ENCODE measurements at regions of chr3 and their contacts with region 1.

Region 1: GRCh38 chr3:34807611-34808010 is 831.7 kb upstream of the ARPP21 start:
- DNase-seq: no peak

Region 2: DNA sequence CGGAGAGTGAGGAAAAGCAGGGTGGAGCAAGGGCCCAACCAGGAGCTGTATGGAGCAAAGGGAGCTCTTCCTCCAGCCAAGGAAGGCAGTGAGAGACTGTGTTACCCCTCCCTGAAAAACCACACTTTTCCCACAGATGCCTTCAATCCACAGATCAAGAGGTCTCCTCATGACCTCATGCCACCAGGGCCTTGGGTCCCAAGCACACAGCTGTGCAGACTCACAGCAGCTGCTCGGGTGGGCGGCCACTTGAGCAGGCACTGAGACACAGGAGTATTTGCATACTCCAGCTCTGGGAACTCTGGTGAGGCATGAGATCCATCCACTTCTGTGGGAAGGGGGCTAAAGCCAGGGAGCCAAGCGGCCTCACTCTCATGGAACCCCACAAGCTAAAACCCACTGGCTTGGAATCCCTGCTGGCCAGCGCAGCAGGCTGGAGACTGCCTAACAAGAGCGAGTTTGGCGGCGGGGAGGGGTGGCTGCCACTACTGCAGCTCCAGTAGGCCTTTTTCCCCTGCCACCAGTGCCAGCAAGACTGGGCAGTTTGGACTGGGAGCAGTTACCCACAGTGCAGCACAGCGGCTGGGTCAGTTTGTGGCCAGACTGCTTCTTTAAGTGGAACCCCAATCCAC is 48.9 kb before region 1 on chr3:
- intact Hi-C with region 1: no loop called
- DNase-seq: no peak

Region 3: DNA sequence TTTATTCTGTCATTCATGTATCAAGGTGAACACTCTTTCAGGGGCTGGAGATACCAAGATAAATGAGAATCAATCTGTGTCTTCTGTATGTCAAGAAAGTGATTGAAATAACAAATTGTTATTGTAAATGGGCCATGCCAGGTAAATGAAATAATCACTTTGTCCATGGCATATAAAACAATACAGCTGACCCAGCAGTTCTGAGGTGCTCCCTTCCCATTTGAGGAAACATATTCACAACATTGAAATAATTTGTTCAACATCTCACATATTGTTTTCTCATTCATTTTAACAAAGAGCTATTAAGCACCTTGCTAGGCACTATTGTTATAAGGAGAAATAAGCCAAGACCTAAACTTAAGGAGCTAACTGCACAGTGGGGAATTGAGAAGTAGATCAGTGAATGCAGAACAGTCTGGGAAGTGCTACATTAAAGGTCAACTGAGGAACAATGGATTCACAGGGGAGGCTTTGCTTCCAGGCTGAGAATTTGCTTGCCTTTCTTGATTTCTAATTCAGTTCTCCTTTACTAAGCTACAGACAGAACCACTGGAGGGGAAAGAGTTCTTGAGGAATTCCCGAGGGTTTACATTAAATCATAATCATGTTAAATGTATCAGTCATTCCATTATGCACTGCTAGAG is 25.4 kb after region 1 on chr3:
- intact Hi-C with region 1: loop called in 1 of 2 experiments (anchors 1 kb)
- DNase-seq: no peak

Region 4: DNA sequence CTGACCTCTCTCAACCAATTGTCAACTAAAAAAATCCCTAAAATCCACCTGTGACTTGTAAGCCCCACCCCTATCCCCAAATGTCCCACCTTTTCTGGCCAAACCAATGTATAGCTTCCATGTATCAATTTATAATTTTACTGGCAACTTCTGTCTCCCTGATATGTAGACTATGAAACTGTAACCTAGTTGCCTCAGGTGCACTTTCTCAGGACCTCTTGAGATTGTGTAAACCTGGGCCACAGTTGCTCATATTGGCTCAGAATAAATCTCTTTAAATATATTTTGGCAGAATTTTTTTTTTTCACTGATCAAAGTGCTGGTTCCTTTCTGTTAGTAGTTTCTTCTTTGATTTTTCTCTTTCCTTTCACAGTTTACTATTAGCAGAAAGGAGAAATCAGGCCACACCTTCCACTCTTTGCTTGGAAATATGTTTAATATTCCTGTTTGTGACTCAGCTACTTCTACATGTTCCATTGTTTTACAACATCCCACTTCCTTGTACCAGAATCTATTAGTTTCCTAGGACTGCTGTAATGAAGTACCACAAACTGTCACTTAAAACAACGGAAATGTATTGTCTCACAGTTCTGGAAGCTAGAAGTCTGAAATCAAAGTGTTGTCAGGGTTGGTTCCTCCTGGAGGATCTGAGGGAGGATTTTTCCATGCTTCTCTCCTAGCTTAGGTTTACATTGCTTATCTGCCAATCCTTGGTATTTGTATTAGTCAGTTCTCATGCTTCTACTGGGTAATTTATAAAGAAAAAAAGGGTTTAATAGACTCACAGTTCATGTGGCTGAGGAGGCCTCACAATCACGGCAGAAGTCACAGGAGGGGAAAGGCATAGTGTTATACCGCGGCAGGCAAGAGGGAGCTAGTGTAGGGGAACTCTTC is 30.5 kb after region 1 on chr3:
- intact Hi-C with region 1: loop called in 1 of 2 experiments (anchors 2 kb)
- DNase-seq: no peak